Endothelial cell of umbilical vein (primary cell): ENCODE measurements at regions of chr3 and their contacts with region 1.

Region 1: GRCh38 chr3:78258798-78259197 is 1218.9 kb downstream of the ROBO2 start:
- DNase-seq: no peak
- H3K4me3 ChIP-seq: no peak overlapping the region
- H3K27ac ChIP-seq: no peak overlapping the region
- H3K4me1 ChIP-seq: no peaks in the 10 kb centered on the region
- H3K27me3 ChIP-seq: no peaks in the 10 kb centered on the region
- CTCF ChIP-seq: no peak
- POLR2A ChIP-seq: no peak

Region 2: DNA sequence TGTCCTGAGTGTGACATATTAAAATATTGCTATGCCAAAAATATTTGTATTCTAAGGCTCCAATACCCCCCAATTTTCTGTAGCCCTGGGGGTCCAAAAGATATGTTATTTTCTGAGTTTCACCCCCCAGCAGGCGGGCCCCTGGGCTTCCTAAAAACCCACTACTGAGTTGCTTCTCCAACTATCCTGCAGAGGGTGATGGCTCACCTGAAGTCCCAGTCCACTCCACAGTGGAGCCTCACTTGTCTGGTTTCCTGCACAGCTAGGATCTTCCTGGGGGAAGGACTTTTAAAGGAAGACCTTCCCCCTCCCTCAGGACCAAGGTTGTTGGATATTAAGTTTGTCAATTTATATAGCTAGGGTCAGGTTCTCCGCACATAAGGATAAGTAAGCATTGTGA is 37.5 kb before region 1 on chr3:
- CTCF ChIA-PET with region 1: no interaction called
- POLR2A ChIA-PET with region 1: no interaction called
- dilution Hi-C with region 1: no loop called
- intact Hi-C with region 1: loop called (anchors 5 kb)
- DNase-seq: no peak
- H3K4me3 ChIP-seq: no peak overlapping the region
- H3K27ac ChIP-seq: no peak overlapping the region
- H3K4me1 ChIP-seq: no peaks in the 10 kb centered on the region
- H3K27me3 ChIP-seq: no peaks in the 10 kb centered on the region
- CTCF ChIP-seq: no peak
- POLR2A ChIP-seq: no peak

Region 3: GRCh38 chr3:78287085-78287484 is 28.3 kb after region 1 on chr3:
- CTCF ChIA-PET with region 1: no interaction called
- POLR2A ChIA-PET with region 1: no interaction called
- dilution Hi-C with region 1: no loop called
- intact Hi-C with region 1: no loop called
- DNase-seq: no peak
- H3K4me3 ChIP-seq: no peak overlapping the region
- H3K27ac ChIP-seq: no peak overlapping the region
- H3K4me1 ChIP-seq: no peaks in the 10 kb centered on the region
- H3K27me3 ChIP-seq: no peaks in the 10 kb centered on the region
- CTCF ChIP-seq: no peak
- POLR2A ChIP-seq: no peak